ENCODE measurements at regions of chr5 and their contacts with region 1.

Region 1: GRCh38 chr5:87267574-87268125 is at the start of gene RASA1:
- DNase-seq: peak; percentile 97 to 99
- ATAC-seq: peak; percentile 98
- H3K4me3 ChIP-seq: peak within 1 kb of the TSS; percentile 81 to 82
- H3K27ac ChIP-seq: peak within 1 kb of the TSS; percentile 10 to 60
- H3K4me1 ChIP-seq: no peaks in the 10 kb centered on the region
- H3K27me3 ChIP-seq: no peaks in the 10 kb centered on the region
- total RNA-seq, gene RASA1: 25.3 to 33.6 TPM

Region 2: DNA sequence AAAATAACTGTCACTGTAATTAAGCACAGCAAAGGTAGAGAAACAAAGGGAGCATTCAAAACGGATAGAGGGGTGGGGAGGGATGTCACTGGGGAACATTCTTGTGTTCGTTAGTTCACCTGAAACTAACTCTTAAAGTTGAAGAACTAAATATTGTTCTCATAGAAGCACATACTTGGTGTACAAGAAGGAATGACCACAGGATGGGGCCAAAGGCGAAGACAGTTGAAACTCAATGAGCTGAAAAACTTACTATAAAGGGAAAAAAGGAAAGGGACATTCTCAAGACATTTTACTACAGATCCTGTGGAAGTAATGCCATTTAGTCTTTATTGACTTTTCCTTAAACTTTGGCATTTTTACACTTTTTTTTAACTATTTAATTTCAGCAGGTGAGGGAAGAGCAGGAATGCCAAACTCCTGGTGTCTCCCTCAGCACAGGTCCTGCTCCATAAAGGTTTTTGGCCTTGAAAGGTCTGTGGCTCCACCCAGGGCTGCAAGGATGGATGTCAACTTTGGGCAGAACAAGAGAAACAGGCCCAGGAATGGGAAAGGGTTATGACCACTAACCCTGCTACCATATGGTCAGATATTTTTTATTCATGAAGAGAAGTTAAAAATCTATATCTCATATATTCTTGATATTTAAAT is 197.6 kb before region 1 on chr5:
- intact Hi-C with region 1: loop called in 1 of 2 experiments (anchors 5 kb)
- DNase-seq: peak in 1 of 2 donors; percentile 55
- ATAC-seq: no peak
- H3K4me3 ChIP-seq: no peak overlapping the region
- H3K27ac ChIP-seq: no peak overlapping the region
- H3K4me1 ChIP-seq: no peaks in the 10 kb centered on the region
- H3K27me3 ChIP-seq: no peaks in the 10 kb centered on the region

Region 3: GRCh38 chr5:87121304-87122150 is 146.1 kb before region 1 on chr5:
- intact Hi-C with region 1: loop called in 1 of 2 experiments (anchors 5 kb)
- DNase-seq: no peak
- ATAC-seq: peak; percentile 80
- H3K4me3 ChIP-seq: no peak overlapping the region
- H3K27ac ChIP-seq: peak overlapping the region; percentile 78 to 96
- H3K4me1 ChIP-seq: peaks cover 4 to 6% of the 10 kb centered on the region in 2 donors
- H3K27me3 ChIP-seq: no peaks in the 10 kb centered on the region

Region 4: DNA sequence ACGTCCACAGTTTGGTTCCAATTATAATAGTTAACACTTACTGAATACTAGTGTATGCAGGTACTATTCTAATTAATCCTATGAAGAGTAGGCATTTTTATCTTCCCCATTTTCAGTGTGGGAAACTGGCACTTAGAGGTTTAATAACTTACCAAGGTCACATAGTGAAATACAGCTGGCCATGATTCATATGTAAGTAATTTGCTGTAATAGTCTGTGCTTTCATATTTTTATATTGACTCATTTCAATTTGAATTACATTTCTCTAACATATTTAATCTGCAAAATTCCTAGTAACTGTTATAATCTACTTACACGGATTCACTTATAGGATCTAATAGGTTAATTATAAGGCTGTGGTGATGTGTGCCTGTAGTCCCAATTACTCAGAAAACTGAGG is 125.7 kb after region 1 on chr5:
- intact Hi-C with region 1: loop called in 1 of 2 experiments (anchors 10 kb)
- DNase-seq: no peak
- ATAC-seq: no peak
- H3K4me3 ChIP-seq: no peak overlapping the region
- H3K27ac ChIP-seq: peak overlapping the region; percentile 57 to 71
- H3K4me1 ChIP-seq: peaks cover 0 to 11% of the 10 kb centered on the region in 2 donors
- H3K27me3 ChIP-seq: no peaks in the 10 kb centered on the region

Region 5: GRCh38 chr5:87412630-87413342 is 145.1 kb after region 1 on chr5 and contains the start of gene CCNH:
- intact Hi-C with region 1: loop called in 1 of 2 experiments (anchors 1 kb)
- DNase-seq: peak; percentile 98 to 99
- ATAC-seq: peak; percentile 99
- H3K4me3 ChIP-seq: peak within 1 kb of the TSS; percentile 52 to 65
- H3K27ac ChIP-seq: peak within 1 kb of the TSS; percentile 33 to 98
- H3K4me1 ChIP-seq: peaks cover 0 to 1% of the 10 kb centered on the region in 2 donors
- H3K27me3 ChIP-seq: no peaks in the 10 kb centered on the region
- total RNA-seq, gene CCNH: 83.4 to 96.9 TPM

Measured in aorta (tissue), 5 donors.